Natural killer cell (primary cell): ENCODE measurements at regions of chr5 and their contacts with region 1.

Region 1: DNA sequence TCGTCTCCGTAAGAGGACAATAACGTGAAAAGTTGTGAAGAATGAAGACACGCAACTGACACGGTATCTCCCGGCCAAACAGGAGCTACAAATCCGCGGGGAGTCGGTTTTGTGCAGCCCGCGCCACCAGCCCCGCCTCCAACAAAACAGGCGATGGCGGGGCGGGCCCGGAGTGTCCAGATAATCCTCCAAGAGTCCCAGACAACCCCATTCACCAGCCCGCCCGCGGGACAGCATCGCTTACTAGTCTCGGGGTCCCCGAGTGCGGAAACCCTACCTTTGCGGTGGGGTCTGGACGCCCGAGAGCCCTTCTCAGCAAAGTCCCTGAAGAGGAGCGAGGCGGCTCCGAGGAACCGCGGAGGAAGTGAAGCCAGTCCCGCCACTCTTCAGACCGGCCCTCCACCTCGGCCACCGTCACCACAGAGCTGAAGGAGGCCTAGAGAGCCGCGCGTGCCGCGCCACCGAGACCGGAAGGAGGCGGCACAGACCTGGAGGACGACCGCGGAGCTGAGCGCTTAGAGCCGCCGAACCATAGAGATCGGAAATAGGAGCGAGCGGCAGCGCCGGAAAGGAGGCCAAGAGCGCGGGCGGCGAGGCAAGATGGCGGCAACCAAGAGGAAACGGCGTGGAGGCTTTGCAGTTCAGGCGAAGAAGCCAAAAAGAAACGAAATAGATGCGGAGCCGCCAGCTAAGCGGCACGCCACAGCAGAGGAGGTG is at the starts of genes BRIX1 and RAD1:
- DNase-seq: peak; percentile 87 to 96
- ATAC-seq: peak; percentile 92 to 99 (median 96)
- H3K4me3 ChIP-seq: peak within 1 kb of the TSS; percentile 93
- H3K4me3 Mint-ChIP-seq: no peak within 1 kb of the TSS
- H3K27ac ChIP-seq: peak within 1 kb of the TSS; percentile 81
- H3K27ac Mint-ChIP-seq: no peak within 1 kb of the TSS
- H3K4me1 ChIP-seq: peaks cover 13% of the 10 kb centered on the region
- H3K4me1 Mint-ChIP-seq: peaks cover 18 to 32% of the 10 kb centered on the region in 2 donors
- H3K27me3 ChIP-seq: no peaks in the 10 kb centered on the region
- H3K27me3 Mint-ChIP-seq: no peaks in the 10 kb centered on the region
- CTCF ChIP-seq: no peak
- total RNA-seq, gene BRIX1: 18.0 to 30.9 (median 30.6) TPM
- total RNA-seq, gene RAD1: 24.3 to 30.9 (median 29.7) TPM

Region 2: DNA sequence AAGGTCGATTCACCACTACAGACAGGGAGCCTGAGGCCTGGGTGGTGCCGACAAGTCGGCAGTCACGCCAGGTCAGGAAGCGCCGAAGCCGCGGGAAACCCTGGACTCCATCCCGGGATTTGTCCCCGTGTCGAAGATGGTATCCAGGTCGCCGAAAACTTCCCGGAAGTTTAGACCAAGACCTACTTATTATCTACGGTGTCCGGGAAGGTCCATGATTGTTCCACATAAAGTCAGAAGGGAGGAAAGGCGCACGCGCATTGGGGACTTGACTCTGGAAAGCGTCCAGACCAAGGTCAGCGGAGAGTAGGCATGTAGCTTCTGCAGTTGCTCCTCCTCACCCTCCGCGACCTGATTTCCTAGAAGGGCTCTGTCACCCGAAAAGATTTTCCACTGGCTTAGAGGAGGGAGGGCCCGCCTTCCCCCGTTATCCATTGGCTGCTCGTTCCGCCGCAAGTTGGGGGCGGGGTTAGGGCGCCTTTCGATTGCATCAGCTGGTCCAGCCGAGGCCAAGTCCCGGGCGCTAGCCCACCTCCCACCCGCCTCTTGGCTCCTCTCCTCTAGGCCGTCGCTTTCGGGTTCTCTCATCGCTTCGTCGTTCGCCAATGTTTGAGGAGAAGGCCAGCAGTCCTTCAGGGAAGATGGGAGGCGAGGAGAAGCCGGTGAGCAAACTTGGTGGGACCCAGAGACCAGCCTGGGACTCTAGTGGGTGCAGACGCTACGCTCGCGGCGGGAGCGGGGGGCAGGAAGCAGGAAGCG is 1474.6 kb before region 1 on chr5 and contains the start of gene TARS1:
- intact Hi-C with region 1: loop called (anchors 5 kb)
- DNase-seq: peak; percentile 94 to 96
- ATAC-seq: peak; percentile 92 to 98 (median 92)
- H3K4me3 ChIP-seq: peak within 1 kb of the TSS; percentile 91
- H3K4me3 Mint-ChIP-seq: no peak within 1 kb of the TSS
- H3K27ac ChIP-seq: peak within 1 kb of the TSS; percentile 90
- H3K27ac Mint-ChIP-seq: no peak within 1 kb of the TSS
- H3K4me1 ChIP-seq: peaks cover 21% of the 10 kb centered on the region
- H3K4me1 Mint-ChIP-seq: peaks cover 23 to 31% of the 10 kb centered on the region in 2 donors
- H3K27me3 ChIP-seq: no peaks in the 10 kb centered on the region
- H3K27me3 Mint-ChIP-seq: no peaks in the 10 kb centered on the region
- CTCF ChIP-seq: no peak
- total RNA-seq, gene TARS1: 59.9 to 74.8 (median 64.6) TPM

Region 3: GRCh38 chr5:34007621-34008600 is 907.4 kb before region 1 on chr5 and contains the start of gene AMACR:
- intact Hi-C with region 1: loop called (anchors 5 kb)
- DNase-seq: peak; percentile 80 to 90
- ATAC-seq: peak; percentile 87 to 93 (median 88)
- H3K4me3 ChIP-seq: peak within 1 kb of the TSS; percentile 85
- H3K4me3 Mint-ChIP-seq: peak within 1 kb of the TSS; percentile 84
- H3K27ac ChIP-seq: peak within 1 kb of the TSS; percentile 91
- H3K27ac Mint-ChIP-seq: peak within 1 kb of the TSS; percentile 80 to 84
- H3K4me1 ChIP-seq: peaks cover 9% of the 10 kb centered on the region
- H3K4me1 Mint-ChIP-seq: peaks cover 30 to 34% of the 10 kb centered on the region in 2 donors
- H3K27me3 ChIP-seq: no peaks in the 10 kb centered on the region
- H3K27me3 Mint-ChIP-seq: no peaks in the 10 kb centered on the region
- CTCF ChIP-seq: no peak
- total RNA-seq, gene AMACR: 2.7 to 3.8 (median 2.9) TPM

Region 4: DNA sequence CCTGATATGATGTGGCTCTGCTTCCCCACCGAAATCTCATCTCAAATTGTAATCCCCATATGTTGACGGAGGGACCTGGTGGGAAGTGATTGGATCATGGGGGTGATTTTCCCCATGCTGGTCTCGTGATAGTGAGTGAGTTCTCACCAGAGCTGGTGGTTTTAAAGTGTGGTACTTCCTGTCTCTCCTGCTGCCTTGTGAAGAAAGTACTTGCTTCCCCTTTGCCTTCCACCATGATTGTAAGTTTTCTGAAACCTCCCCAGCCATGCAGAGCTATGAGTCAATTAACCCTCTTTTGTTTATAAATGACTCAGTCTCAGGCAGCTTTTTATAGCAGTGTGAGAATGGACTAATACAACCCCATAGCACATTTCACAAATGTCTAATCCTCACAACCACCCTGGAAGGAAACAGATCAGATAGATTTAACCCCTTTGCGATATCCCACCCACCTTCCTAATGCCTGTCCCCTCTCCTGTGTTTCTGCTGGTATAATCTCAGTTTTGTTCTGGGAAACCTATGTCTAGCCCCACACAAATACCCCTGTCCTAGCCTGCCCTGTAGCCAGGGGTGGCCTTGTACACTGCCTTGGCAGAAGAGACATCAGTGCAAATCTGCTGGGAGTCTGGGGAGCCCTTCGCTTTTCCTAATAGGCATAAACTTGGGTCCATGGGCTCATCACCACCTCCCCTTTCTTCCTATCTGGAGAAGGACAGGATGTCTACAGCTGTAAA is 416.1 kb before region 1 on chr5:
- intact Hi-C with region 1: loop called (anchors 5 kb)
- DNase-seq: peak in 1 of 2 donors; percentile 26
- ATAC-seq: peak; percentile 75 to 80 (median 77)
- H3K4me3 ChIP-seq: no peak overlapping the region
- H3K4me3 Mint-ChIP-seq: peak overlapping the region; percentile 70
- H3K27ac ChIP-seq: peak overlapping the region; percentile 52
- H3K27ac Mint-ChIP-seq: peak overlapping the region; percentile 92 to 93
- H3K4me1 ChIP-seq: peaks cover 53% of the 10 kb centered on the region
- H3K4me1 Mint-ChIP-seq: peaks cover 60 to 63% of the 10 kb centered on the region in 2 donors
- H3K27me3 ChIP-seq: no peaks in the 10 kb centered on the region
- H3K27me3 Mint-ChIP-seq: no peaks in the 10 kb centered on the region
- CTCF ChIP-seq: no peak

Region 5: GRCh38 chr5:34838785-34839714 is 76.2 kb before region 1 on chr5 and contains the start of gene TTC23L:
- intact Hi-C with region 1: loop called (anchors 5 kb)
- DNase-seq: peak; percentile 89 to 98
- ATAC-seq: peak; percentile 88 to 95 (median 89)
- H3K4me3 ChIP-seq: peak within 1 kb of the TSS; percentile 73
- H3K4me3 Mint-ChIP-seq: peak within 1 kb of the TSS; percentile 93
- H3K27ac ChIP-seq: peak within 1 kb of the TSS; percentile 84
- H3K27ac Mint-ChIP-seq: peak within 1 kb of the TSS; percentile 90 to 98
- H3K4me1 ChIP-seq: peaks cover 12% of the 10 kb centered on the region
- H3K4me1 Mint-ChIP-seq: peaks cover 14 to 20% of the 10 kb centered on the region in 2 donors
- H3K27me3 ChIP-seq: no peaks in the 10 kb centered on the region
- H3K27me3 Mint-ChIP-seq: peaks cover 7 to 8% of the 10 kb centered on the region in 2 donors
- CTCF ChIP-seq: no peak
- total RNA-seq, gene TTC23L: 0.48 TPM in 1 of 3 donors, not detected in the others

Region 6: GRCh38 chr5:34929150-34929719 is 13.9 kb after region 1 on chr5 and contains the start of gene DNAJC21:
- intact Hi-C with region 1: loop called (anchors 1 kb)
- DNase-seq: peak; percentile 93 to 98
- ATAC-seq: peak; percentile 86 to 97 (median 88)
- H3K4me3 ChIP-seq: peak within 1 kb of the TSS; percentile 64
- H3K4me3 Mint-ChIP-seq: peak within 1 kb of the TSS; percentile 97
- H3K27ac ChIP-seq: peak within 1 kb of the TSS; percentile 72
- H3K27ac Mint-ChIP-seq: peak within 1 kb of the TSS; percentile 91 to 96
- H3K4me1 ChIP-seq: peaks cover 3% of the 10 kb centered on the region
- H3K4me1 Mint-ChIP-seq: peaks cover 23 to 34% of the 10 kb centered on the region in 2 donors
- H3K27me3 ChIP-seq: no peaks in the 10 kb centered on the region
- H3K27me3 Mint-ChIP-seq: no peaks in the 10 kb centered on the region
- CTCF ChIP-seq: no peak
- total RNA-seq, gene DNAJC21: 46.8 to 57.9 (median 56.1) TPM

Region 7: GRCh38 chr5:34998058-34998789 is 82.9 kb after region 1 on chr5:
- intact Hi-C with region 1: no loop called
- DNase-seq: no peak
- ATAC-seq: no peak
- H3K4me3 ChIP-seq: no peak overlapping the region
- H3K4me3 Mint-ChIP-seq: no peak overlapping the region
- H3K27ac ChIP-seq: no peak overlapping the region
- H3K27ac Mint-ChIP-seq: no peak overlapping the region
- H3K4me1 ChIP-seq: no peaks in the 10 kb centered on the region
- H3K4me1 Mint-ChIP-seq: no peaks in the 10 kb centered on the region
- H3K27me3 ChIP-seq: no peaks in the 10 kb centered on the region
- H3K27me3 Mint-ChIP-seq: peaks cover 19 to 24% of the 10 kb centered on the region in 2 donors
- CTCF ChIP-seq: no peak